B cell (primary cell): ENCODE measurements at regions of chr16 and their contacts with region 1.

Region 1: GRCh38 chr16:10314811-10315210 is 71.0 kb upstream of the ATF7IP2 start:
- DNase-seq: peak; percentile 47
- ATAC-seq: peak; percentile 46
- H3K4me3 ChIP-seq: no peak overlapping the region
- H3K4me3 Mint-ChIP-seq: peak overlapping the region; percentile 23
- H3K27ac ChIP-seq: no peak overlapping the region
- H3K27ac Mint-ChIP-seq: peak overlapping the region; percentile 73
- H3K4me1 ChIP-seq: peaks cover 18 to 32% of the 10 kb centered on the region in 2 donors
- H3K4me1 Mint-ChIP-seq: peaks cover 28% of the 10 kb centered on the region
- H3K27me3 ChIP-seq: no peaks in the 10 kb centered on the region
- H3K27me3 Mint-ChIP-seq: no peaks in the 10 kb centered on the region
- CTCF ChIP-seq: peak; percentile 33

Region 2: DNA sequence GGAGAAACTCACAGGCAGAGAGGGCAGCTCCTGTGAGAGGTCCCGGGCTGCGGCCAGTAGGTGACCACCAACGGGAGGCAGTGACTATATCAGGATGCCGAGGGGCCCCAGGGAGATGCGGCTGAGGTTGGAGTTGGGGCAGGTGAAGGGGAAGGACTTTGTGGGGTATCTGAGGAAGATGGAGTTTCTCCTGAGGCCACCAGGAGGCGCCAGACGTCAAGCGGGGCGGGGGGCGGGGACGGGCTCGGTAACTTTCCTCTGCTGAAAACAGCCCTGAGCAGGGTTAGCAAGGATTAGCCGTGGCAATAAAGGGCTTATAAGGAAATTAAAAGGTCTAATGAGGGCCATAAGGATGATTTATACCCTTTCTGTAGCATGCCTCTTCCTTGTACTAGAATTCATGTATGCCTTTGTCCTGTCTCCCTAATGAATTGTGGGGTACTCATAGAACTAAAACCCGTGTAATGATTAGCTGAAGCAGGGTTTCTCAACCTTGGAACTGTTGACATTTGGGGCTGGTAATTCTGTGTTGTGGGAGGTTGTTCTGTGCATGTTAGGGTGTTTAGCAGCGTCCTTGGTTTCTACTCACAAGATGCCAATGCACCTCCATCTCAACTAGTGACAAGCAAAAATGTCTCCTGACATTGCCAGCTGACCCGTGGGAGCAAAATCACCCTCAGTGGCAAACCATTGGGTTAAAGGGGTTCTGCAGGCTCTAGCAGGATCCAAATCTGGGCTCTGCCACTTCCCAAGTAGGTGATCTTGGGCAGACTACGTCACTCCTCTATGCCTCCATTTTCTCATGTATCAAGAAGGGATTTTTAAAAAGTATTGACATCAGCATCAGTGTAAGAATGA is 57.8 kb before region 1 on chr16:
- CTCF ChIA-PET with region 1: interaction called, 77 read pairs
- POLR2A ChIA-PET with region 1: no interaction called
- intact Hi-C with region 1: loop called (anchors 1 kb)
- DNase-seq: peak; percentile 83
- ATAC-seq: peak; percentile 90
- H3K4me3 ChIP-seq: peak overlapping the region in 1 of 5 experiments; percentile 18
- H3K4me3 Mint-ChIP-seq: peak overlapping the region; percentile 42
- H3K27ac ChIP-seq: peak overlapping the region in 1 of 2 donors; percentile 56
- H3K27ac Mint-ChIP-seq: peak overlapping the region; percentile 70
- H3K4me1 ChIP-seq: peaks cover 31 to 49% of the 10 kb centered on the region in 2 donors
- H3K4me1 Mint-ChIP-seq: peaks cover 45% of the 10 kb centered on the region
- H3K27me3 ChIP-seq: no peaks in the 10 kb centered on the region
- H3K27me3 Mint-ChIP-seq: no peaks in the 10 kb centered on the region
- CTCF ChIP-seq: peak; percentile 87